ENCODE measurements at regions of chr5 and their contacts with region 1.

Region 1: GRCh38 chr5:69007726-69008368 is 86.0 kb upstream of the SLC30A5 start:
- DNase-seq: peak; percentile 58
- H3K4me3 ChIP-seq: no peak overlapping the region
- H3K27ac ChIP-seq: no peak overlapping the region
- H3K4me1 ChIP-seq: no peaks in the 10 kb centered on the region
- H3K27me3 ChIP-seq: no peaks in the 10 kb centered on the region
- CTCF ChIP-seq: peak; percentile 99 to 100

Region 2: DNA sequence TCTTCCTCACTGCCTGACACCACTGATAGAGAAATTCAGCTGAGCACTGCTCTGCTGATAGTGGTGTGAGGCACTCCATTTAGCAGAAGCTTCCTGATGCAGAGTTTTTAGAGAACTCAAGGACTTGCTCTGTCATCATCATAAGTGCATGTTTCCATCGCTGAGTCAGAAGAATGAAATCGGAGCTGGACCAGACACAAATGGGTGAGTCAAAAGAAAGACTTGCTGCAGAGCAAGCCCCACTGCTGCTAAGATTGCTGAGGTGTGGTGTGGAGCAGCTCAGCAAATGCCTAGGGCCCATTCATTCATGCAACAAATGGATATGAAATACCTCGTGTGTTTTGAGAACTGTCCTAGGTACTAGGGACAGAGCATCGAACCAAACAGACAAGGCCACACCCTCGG is 324.2 kb before region 1 on chr5:
- CTCF ChIA-PET with region 1: no interaction called
- dilution Hi-C with region 1: no loop called
- in situ Hi-C with region 1: no loop called
- intact Hi-C with region 1: loop called (anchors 10 kb)
- DNase-seq: peak; percentile 97
- H3K4me3 ChIP-seq: no peak overlapping the region
- H3K27ac ChIP-seq: no peak overlapping the region
- H3K4me1 ChIP-seq: peaks cover 13% of the 10 kb centered on the region
- H3K27me3 ChIP-seq: no peaks in the 10 kb centered on the region
- CTCF ChIP-seq: no peak

Region 3: GRCh38 chr5:68745448-68745847 is 262.4 kb before region 1 on chr5:
- CTCF ChIA-PET with region 1: no interaction called
- dilution Hi-C with region 1: no loop called
- in situ Hi-C with region 1: no loop called
- intact Hi-C with region 1: loop called (anchors 10 kb)
- DNase-seq: no peak
- H3K4me3 ChIP-seq: no peak overlapping the region
- H3K27ac ChIP-seq: no peak overlapping the region
- H3K4me1 ChIP-seq: no peaks in the 10 kb centered on the region
- H3K27me3 ChIP-seq: no peaks in the 10 kb centered on the region
- CTCF ChIP-seq: peak; percentile 8 to 28

Region 4: DNA sequence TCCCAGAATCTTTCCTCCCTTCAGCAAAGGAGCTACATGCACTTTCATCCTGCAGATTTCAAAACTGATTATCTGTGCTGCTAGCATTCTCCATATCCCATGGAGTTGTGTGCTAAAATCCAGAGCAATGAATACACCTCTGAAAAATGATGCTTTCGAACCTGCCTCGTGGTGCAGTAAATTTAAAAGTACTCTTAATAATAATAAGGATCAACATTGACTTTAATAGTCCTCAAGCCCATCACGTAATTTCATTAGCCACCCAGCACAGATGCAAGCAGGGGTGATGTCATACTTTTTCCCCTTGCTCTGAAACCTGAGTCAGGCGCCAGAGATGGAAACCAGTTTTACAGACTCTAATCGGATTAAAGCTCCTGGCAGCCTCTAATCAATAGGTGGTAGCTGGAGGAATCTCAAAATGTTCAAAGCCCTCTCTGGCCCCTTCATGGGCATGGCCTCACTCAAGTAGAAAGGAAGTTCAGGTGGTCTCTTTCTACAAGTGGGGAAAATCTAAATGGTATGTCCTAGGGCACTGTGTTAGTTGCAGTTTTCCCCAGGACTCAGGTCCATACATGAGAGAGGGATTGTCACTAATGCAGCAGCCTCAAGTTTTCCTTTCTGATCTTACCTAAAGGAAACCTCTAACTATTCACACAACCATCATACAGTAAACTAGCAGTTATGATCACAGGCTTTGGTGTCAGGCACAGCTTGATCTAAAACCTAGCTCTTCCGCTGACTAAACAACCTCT is 135.6 kb before region 1 on chr5:
- CTCF ChIA-PET with region 1: no interaction called
- dilution Hi-C with region 1: no loop called
- in situ Hi-C with region 1: no loop called
- intact Hi-C with region 1: no loop called
- DNase-seq: no peak
- H3K4me3 ChIP-seq: no peak overlapping the region
- H3K27ac ChIP-seq: no peak overlapping the region
- H3K4me1 ChIP-seq: no peaks in the 10 kb centered on the region
- H3K27me3 ChIP-seq: no peaks in the 10 kb centered on the region
- CTCF ChIP-seq: no peak

Region 5: GRCh38 chr5:68884883-68885282 is 123.0 kb before region 1 on chr5:
- CTCF ChIA-PET with region 1: no interaction called
- dilution Hi-C with region 1: no loop called
- in situ Hi-C with region 1: no loop called
- intact Hi-C with region 1: loop called (anchors 2 kb)
- DNase-seq: peak; percentile 11
- H3K4me3 ChIP-seq: no peak overlapping the region
- H3K27ac ChIP-seq: no peak overlapping the region
- H3K4me1 ChIP-seq: no peaks in the 10 kb centered on the region
- H3K27me3 ChIP-seq: peaks cover 1% of the 10 kb centered on the region
- CTCF ChIP-seq: peak; percentile 42

Region 6: GRCh38 chr5:68962757-68963484 is 44.9 kb before region 1 on chr5:
- CTCF ChIA-PET with region 1: no interaction called
- dilution Hi-C with region 1: no loop called
- in situ Hi-C with region 1: no loop called
- intact Hi-C with region 1: loop called (anchors 2 kb)
- DNase-seq: peak; percentile 48
- H3K4me3 ChIP-seq: no peak overlapping the region
- H3K27ac ChIP-seq: no peak overlapping the region
- H3K4me1 ChIP-seq: no peaks in the 10 kb centered on the region
- H3K27me3 ChIP-seq: no peaks in the 10 kb centered on the region
- CTCF ChIP-seq: peak; percentile 75 to 92

Region 7: DNA sequence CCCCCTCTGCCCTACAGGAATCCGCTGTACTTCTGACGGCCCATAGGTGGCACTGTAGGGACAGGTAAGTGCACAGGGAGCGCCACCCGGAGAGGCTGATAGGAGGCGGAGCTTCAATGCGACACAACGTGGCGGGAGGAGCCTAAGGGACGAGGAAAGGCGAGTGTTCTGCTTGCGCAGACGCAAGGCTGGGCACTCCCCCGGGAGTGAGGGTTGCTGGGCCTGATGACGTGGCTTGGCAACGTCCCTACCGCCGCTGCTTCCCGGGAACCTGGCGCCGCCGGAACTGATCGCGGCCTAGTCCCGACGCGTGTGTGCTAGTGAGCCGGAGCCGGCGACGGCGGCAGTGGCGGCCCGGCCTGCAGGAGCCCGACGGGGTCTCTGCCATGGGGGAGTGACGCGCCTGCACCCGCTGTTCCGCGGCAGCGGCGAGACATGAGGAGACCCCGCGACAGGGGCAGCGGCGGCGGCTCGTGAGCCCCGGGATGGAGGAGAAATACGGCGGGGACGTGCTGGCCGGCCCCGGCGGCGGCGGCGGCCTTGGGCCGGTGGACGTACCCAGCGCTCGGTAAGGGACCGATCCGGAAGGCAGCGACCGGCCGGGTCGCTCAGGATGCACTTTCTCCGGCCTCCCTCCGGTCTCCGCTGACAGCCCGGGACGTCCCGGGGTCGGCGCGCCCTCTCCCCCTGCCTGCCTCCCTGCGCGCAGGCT is 86.1 kb after region 1 on chr5 and contains the start of gene SLC30A5:
- CTCF ChIA-PET with region 1: no interaction called
- dilution Hi-C with region 1: no loop called
- in situ Hi-C with region 1: no loop called
- intact Hi-C with region 1: no loop called
- DNase-seq: peak; percentile 99
- H3K4me3 ChIP-seq: peak within 1 kb of the TSS; percentile 82 to 88 (median 87)
- H3K27ac ChIP-seq: peak within 1 kb of the TSS; percentile 77
- H3K4me1 ChIP-seq: peaks cover 8% of the 10 kb centered on the region
- H3K27me3 ChIP-seq: no peaks in the 10 kb centered on the region
- CTCF ChIP-seq: peak; percentile 86 to 95
- total RNA-seq, gene SLC30A5: 47.8 to 48.5 TPM

Region 8: GRCh38 chr5:69170969-69171368 is 163.1 kb after region 1 on chr5:
- CTCF ChIA-PET with region 1: no interaction called
- dilution Hi-C with region 1: no loop called
- in situ Hi-C with region 1: no loop called
- intact Hi-C with region 1: no loop called
- DNase-seq: no peak
- H3K4me3 ChIP-seq: no peak overlapping the region
- H3K27ac ChIP-seq: no peak overlapping the region
- H3K4me1 ChIP-seq: peaks cover 19% of the 10 kb centered on the region
- H3K27me3 ChIP-seq: no peaks in the 10 kb centered on the region
- CTCF ChIP-seq: no peak

Region 9: DNA sequence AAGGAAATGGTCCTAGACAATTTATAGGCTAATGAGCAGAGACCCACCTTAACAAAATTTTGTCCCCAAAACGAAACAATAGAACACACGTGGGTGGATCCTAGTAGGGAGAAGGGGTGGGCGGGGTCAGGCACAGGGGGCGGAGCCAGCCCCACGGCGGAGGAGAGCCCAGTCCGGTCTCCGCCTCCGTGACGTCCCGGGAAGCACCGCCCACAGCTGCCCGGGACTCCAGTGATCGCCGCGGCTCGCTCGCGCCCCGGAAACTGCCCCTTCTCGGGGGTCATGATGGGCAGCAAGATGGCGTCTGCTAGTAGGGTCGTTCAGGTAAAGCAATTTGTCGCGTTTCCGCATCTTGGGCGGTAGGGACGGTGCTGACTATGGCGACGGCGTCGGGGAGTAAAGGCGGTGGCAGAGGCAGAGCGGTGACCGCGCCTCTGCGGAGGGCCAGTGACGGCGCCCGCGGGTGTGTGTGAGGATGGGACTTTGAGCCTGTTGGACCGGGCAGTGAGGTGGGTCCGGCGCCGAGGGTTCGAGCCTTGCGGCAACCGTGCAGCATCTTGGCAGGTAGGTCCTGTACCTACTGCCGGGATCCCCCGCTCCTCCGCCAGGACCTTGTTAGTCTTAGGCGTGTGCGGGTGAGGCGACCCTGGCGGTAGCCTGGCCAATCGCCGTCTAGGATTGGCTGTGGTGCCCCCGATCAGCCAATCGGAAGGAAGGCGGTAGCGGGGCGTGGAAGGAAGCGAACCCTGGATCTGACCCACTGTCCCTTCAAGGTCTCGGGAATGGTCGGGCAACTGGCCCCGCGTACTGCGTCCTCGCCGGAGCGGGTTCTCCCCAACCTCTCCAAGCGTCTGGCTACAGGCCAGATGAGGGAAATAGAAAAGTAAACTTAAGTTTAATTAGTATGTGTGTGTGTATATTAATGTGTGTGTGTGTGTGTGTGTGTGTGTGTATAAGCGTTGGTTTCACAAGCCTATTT is 210.0 kb after region 1 on chr5:
- CTCF ChIA-PET with region 1: no interaction called
- dilution Hi-C with region 1: no loop called
- in situ Hi-C with region 1: no loop called
- intact Hi-C with region 1: no loop called
- DNase-seq: peak; percentile 89
- H3K4me3 ChIP-seq: peak overlapping the region; percentile 95 to 100 (median 100)
- H3K27ac ChIP-seq: peak overlapping the region; percentile 78
- H3K4me1 ChIP-seq: peaks cover 10% of the 10 kb centered on the region
- H3K27me3 ChIP-seq: no peaks in the 10 kb centered on the region
- CTCF ChIP-seq: peak; percentile 5 to 28

Measured in mammary epithelial cell (primary cell).